ENCODE measurements at regions of chr2 and their contacts with region 1.

Region 1: DNA sequence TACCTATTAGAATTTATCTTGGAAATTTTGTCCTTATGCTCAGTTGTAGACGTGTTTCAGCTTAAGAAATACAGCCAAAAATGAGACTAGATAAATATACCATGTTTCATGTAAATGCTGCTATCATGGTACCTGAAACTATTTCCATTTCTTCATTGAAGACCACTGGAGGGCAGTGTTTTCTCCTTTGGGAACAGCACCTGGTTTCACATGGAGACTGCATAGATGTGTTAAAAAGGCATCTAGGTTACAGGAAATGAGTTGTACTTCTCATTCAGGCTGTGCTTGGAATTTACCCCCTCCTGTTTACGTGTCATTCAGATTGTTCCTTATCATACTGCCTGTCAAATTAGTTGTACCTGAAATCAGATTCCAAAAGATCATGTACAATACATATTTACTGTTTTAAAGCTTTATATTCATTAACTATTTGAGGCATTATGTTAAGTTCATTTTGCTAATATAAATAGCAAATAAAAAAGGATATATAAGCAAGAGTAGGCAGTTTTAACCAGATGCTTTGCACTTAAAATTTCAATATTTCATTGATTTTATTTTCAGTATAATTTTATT is 57.3 kb upstream of the PSMD14 start:
- DNase-seq: peak; percentile 71
- H3K4me3 ChIP-seq: no peak overlapping the region
- H3K27ac ChIP-seq: no peak overlapping the region
- H3K4me1 ChIP-seq: no peaks in the 10 kb centered on the region
- H3K27me3 ChIP-seq: no peaks in the 10 kb centered on the region
- CTCF ChIP-seq: peak; percentile 75 to 77

Region 2: DNA sequence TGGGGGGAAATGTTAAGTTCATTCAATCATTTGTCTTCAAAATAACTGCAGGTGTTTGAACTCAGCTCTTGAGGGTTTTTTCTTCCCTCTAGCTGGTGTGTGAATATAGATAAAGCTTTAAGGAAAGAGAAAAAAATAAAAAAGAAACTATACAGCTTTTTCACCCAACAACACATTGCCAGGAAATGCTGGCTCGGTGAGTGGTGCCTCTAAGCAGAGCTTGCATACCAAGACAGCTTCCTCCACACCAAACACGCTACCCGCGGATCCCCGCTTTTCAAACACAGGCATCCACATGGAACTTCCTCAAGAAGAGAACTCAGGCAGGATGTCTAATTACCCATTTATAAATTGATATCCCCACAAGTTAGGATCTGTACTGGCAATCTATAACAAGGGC is 160.5 kb before region 1 on chr2:
- CTCF ChIA-PET with region 1: no interaction called
- dilution Hi-C with region 1: no loop called
- in situ Hi-C with region 1: no loop called
- intact Hi-C with region 1: no loop called
- DNase-seq: no peak
- H3K4me3 ChIP-seq: no peak overlapping the region
- H3K27ac ChIP-seq: no peak overlapping the region
- H3K4me1 ChIP-seq: no peaks in the 10 kb centered on the region
- H3K27me3 ChIP-seq: no peaks in the 10 kb centered on the region
- CTCF ChIP-seq: no peak

Region 3: DNA sequence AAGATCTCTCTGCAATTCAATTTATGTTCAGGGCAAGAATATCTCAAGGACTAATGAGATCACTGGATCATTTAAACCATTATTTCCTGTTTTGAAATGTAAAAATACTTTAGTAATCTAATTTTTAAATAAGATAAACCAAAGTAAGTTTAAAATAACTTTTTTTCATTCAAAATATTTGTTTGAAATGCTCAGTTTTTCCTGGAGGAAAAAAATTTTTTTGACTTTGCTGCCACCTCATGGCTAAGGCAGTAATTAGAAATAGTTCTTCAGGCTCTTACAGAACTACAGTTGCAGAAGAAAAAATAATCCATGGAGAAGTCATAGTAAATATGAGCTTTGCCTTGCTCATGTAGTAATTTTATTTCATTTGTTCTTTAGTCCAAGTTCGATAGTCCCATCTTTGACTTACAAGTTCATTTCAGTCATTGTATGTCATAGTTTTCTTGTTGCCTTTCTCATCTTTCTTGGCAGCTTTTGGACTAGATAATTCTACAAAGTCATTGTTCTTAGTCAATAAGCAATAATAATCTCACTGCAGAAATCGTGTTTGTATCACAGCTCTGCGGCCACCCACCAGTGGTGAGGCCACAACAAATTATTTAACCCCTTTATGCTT is 695.6 kb after region 1 on chr2:
- CTCF ChIA-PET with region 1: no interaction called
- dilution Hi-C with region 1: no loop called
- in situ Hi-C with region 1: loop called in 1 of 2 experiments (anchors 25 kb)
- intact Hi-C with region 1: loop called (anchors 2 kb)
- DNase-seq: peak; percentile 7
- H3K4me3 ChIP-seq: no peak overlapping the region
- H3K27ac ChIP-seq: no peak overlapping the region
- H3K4me1 ChIP-seq: no peaks in the 10 kb centered on the region
- H3K27me3 ChIP-seq: peaks cover 4% of the 10 kb centered on the region
- CTCF ChIP-seq: peak; percentile 50 to 54